ENCODE measurements at regions of chr1 and their contacts with region 1.

Region 1: DNA sequence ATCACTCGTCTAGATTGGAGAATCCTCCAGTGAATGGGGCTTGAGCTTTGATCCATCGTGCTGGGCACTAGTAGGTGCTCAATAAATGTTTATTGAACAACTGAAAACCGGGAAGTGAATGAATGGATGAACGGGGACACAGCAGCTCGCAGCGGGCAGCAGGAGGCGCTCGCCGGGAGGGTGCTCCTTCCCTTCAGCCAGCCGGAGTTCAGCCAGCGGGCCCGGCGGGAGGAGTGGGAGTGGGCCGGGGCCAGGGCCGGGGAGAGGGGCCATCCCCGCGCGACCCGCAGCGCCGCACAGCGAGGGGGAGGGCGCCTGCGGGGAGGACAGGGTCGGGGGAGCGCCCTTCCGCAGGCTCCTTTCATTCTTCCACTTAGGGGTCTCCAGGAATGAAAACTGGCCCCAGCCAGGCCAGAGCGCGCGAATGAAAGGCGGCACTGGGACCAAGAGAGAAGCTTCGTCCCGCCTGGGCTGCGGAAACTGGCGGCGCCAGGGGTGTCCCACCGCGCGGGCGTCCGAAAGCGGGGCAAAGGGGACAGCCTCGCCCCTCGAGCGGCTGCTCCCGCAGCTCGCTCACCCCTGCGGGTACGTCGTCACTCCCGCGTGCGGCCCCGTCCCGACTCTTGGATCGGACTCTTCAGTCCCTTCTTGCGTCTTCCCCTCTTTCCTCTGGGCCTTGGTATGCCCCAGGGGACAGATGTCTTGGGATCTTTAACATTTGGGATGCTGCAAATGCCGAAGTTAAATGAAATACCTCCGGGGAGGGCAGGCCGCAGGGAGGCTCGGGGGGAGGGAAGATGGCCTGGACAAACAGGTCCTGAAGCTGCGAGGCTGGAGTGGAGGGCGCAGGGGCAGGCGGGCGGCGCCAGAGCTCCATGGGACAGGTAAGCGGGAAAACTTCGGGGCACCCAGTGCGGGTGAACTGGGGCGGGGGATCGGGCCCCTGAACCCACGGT is 3.6 kb upstream of the INAVA start:
- DNase-seq: no peak
- H3K4me3 ChIP-seq: no peak overlapping the region
- CTCF ChIP-seq: no peak
- POLR2A ChIP-seq: no peak

Region 2: GRCh38 chr1:201042779-201043461 is 151.8 kb after region 1 on chr1:
- intact Hi-C with region 1: loop called (anchors 10 kb)
- DNase-seq: peak in 1 of 2 donors; percentile 44
- H3K4me3 ChIP-seq: no peak overlapping the region
- CTCF ChIP-seq: no peak
- POLR2A ChIP-seq: no peak

Measured in lower leg skin (tissue), 4 donors.